ENCODE measurements at regions of chr6 and their contacts with region 1.

Region 1: DNA sequence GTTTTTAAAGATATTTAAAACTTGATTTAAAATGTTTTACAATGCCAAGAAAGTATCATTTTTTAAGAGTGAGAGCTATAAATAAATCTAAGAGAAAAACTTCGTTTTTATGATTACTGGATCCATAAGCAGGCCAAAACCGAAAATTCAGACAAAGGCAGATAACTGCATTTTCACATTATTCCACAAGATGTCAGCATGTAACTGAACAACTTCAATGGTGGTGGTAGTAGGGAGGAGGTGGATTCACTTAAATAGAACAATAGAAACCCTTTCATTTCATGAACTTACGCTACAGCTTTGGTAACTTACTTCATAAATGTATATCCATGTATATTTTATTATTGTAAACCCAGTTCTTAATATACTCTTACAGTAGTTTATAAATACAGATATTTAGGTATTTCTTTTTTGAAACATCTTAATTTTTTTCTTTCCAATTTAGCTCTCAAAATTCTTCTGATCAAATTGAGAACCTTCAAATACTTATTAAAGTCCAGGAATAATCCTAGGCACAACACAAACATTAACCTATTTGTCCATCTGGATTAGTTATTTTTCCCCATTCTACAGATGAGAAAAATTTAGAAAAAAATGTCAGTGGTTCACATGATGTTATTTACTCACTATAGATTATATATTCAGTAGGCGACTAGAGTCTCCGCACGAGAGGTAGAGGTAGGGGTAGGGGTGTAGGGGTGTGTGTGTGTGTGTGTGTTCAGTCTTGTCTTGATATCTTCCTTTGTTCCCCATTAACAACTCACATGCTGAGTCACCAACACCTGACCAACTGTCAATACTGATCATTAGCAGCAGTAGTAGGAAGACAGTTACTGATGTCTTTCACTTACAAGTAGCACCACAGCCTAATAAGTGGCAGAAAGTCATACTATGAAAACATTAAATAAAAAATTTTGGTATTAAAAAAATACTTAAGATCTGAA is 111.5 kb downstream of the ARHGAP18 start:
- DNase-seq: peak; percentile 16
- H3K4me3 ChIP-seq: no peak overlapping the region
- CTCF ChIP-seq: peak; percentile 50

Region 2: DNA sequence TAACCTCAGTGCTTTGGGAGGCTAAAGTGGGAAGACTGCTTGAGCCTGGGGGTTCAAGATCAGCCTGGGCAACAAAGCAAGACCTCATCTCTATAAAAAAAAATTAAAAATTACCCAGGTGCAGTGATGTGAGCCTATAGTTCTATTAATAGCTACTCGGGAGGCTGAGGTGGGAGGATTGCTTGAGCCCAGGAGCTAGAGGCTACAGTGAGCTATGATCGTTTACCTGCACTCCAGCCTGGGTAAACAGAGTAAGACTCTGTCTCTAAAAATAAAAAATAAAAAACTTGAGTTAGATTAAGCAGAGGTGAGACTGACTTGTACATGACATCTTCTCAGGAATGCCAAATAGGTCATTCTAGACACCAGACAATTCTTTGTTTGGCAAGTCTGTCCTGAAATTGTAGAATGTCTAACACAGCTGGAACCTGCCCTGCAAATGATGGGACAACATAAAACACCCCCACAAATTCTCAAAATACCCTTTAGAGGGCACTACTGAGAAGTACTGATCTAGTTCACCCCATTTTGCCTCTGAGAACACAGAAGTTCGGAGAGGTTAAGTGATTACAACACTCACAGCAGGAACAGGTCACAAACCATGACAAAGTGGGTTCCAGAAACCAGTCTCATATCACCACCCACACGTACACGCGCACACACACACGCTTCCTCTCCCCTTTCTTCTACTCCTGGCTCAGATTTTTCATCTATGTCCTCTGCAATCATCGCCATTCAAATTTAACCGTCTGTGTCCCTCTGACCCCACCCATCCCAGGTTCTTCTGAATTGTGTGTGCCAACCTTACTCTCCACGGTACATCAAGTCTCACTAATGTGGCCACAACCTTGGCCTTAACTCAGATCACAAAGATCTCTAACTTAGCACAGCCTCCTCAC is 73.2 kb after region 1 on chr6:
- CTCF ChIA-PET with region 1: interaction called, 22 read pairs
- POLR2A ChIA-PET with region 1: no interaction called
- DNase-seq: no peak
- H3K4me3 ChIP-seq: no peak overlapping the region
- CTCF ChIP-seq: no peak

Region 3: GRCh38 chr6:129730477-129731165 is 132.1 kb after region 1 on chr6:
- CTCF ChIA-PET with region 1: interaction called, 97 read pairs
- POLR2A ChIA-PET with region 1: no interaction called
- DNase-seq: no peak
- H3K4me3 ChIP-seq: no peak overlapping the region
- CTCF ChIP-seq: peak; percentile 12

Region 4: DNA sequence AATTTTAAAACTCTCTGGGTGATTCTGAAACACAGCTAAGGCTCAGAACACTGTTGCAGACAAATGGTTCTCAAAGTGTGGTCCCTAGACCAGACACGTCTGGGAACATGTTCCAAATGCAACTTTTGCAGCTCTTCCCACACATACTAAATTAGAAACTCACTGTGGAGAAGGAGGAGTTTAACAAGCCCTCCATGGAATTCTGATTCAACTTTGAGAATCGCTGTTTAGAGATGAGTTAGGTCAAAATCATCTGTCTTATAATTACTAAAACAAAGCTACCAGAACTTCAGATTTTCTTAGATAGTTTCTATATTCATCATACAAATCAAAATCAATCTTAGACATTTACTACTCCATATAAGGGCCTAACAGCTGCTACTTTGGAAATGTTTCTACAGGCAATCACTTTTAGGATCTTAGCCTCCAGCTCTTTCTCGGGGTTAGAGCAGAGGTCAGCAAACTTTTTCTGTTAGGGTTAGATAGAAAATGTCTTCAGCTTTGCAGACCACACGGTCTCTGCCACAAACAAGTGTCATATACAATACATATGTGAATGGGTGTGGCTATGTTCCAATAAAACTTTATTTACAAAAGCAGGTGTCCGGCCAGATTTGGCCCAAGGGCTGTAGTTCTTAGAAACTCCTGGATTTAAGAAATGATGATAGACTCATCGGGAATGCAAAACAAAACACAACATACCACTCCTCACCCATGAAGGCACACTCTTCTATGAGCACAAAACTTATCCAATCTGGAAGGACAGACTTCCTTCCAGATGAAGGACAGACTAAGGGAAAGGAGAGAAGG is 161.5 kb after region 1 on chr6:
- CTCF ChIA-PET with region 1: interaction called, 14 read pairs
- POLR2A ChIA-PET with region 1: no interaction called
- DNase-seq: no peak
- H3K4me3 ChIP-seq: no peak overlapping the region
- CTCF ChIP-seq: no peak

Region 5: GRCh38 chr6:129774697-129775447 is 176.4 kb after region 1 on chr6:
- CTCF ChIA-PET with region 1: interaction called, 80 read pairs
- POLR2A ChIA-PET with region 1: no interaction called
- DNase-seq: peak; percentile 34
- H3K4me3 ChIP-seq: peak overlapping the region; percentile 27
- CTCF ChIP-seq: peak; percentile 95

Region 6: DNA sequence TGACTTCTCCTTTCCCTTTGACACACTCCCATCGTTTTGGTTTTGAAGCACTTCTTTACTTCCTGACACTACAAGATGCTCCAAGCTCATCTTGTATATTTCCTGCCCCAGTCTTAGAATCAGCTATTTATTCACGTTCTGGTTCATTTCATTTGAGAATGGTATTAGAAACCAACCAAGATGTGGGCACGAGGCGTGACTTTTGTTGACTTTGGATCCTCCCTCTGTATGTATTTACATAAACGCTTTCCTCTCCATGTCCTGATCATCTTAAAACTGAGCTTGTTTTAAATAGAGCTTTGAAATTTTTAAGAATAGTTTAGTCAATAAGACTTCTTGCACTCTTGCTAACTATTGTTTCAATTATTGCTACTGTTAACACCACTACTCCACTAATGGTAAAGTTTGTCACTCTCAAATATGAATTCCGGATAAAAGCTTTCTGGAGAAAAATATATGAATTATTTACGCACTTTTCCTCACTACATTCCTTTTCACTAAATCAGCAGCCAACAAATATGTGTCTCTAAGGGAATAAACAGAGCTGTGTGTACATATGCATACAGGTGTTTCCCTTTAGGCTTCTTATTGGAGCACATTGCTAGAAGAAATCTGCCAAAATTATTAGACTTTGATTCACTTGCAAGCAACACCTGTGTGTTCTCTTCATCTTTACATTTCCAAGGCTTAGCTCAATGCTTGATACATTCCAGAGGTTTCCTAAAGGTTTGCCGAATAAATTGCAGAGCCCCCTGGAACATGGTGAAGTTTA is 339.9 kb after region 1 on chr6:
- CTCF ChIA-PET with region 1: interaction called, 25 read pairs
- POLR2A ChIA-PET with region 1: no interaction called
- DNase-seq: no peak
- H3K4me3 ChIP-seq: no peak overlapping the region
- CTCF ChIP-seq: no peak